ENCODE measurements at regions of chr1 and their contacts with region 1.

Region 1: GRCh38 chr1:74771913-74772515 is 39.1 kb downstream of the TYW3 start:
- DNase-seq: peak; percentile 33
- H3K4me3 Mint-ChIP-seq: no peak overlapping the region
- H3K27ac Mint-ChIP-seq: no peak overlapping the region
- H3K4me1 Mint-ChIP-seq: no peaks in the 10 kb centered on the region
- H3K27me3 Mint-ChIP-seq: peaks cover 8% of the 10 kb centered on the region

Region 2: GRCh38 chr1:74197657-74198552 is 574.1 kb before region 1 on chr1 and contains the starts of genes FPGT and LRRIQ3:
- CTCF ChIA-PET with region 1: no interaction called
- intact Hi-C with region 1: loop called (anchors 10 kb)
- DNase-seq: peak; percentile 95
- H3K4me3 Mint-ChIP-seq: peak within 1 kb of the TSS; percentile 89
- H3K27ac Mint-ChIP-seq: peak within 1 kb of the TSS; percentile 92
- H3K4me1 Mint-ChIP-seq: peaks cover 17% of the 10 kb centered on the region
- H3K27me3 Mint-ChIP-seq: no peaks in the 10 kb centered on the region
- total RNA-seq, gene FPGT: 11.0 to 13.9 TPM
- total RNA-seq, gene LRRIQ3: 1.1 to 1.2 TPM

Region 3: GRCh38 chr1:75134647-75135572 is 362.9 kb after region 1 on chr1:
- CTCF ChIA-PET with region 1: no interaction called
- intact Hi-C with region 1: loop called (anchors 5 kb)
- DNase-seq: peak; percentile 39
- H3K4me3 Mint-ChIP-seq: peak overlapping the region; percentile 69
- H3K27ac Mint-ChIP-seq: no peak overlapping the region
- H3K4me1 Mint-ChIP-seq: peaks cover 23% of the 10 kb centered on the region
- H3K27me3 Mint-ChIP-seq: peaks cover 72% of the 10 kb centered on the region

Region 4: GRCh38 chr1:75203415-75204277 is 431.6 kb after region 1 on chr1:
- CTCF ChIA-PET with region 1: interaction called, 7 read pairs
- intact Hi-C with region 1: loop called (anchors 1 kb)
- DNase-seq: no peak
- H3K4me3 Mint-ChIP-seq: no peak overlapping the region
- H3K27ac Mint-ChIP-seq: no peak overlapping the region
- H3K4me1 Mint-ChIP-seq: no peaks in the 10 kb centered on the region
- H3K27me3 Mint-ChIP-seq: peaks cover 4% of the 10 kb centered on the region

Region 5: DNA sequence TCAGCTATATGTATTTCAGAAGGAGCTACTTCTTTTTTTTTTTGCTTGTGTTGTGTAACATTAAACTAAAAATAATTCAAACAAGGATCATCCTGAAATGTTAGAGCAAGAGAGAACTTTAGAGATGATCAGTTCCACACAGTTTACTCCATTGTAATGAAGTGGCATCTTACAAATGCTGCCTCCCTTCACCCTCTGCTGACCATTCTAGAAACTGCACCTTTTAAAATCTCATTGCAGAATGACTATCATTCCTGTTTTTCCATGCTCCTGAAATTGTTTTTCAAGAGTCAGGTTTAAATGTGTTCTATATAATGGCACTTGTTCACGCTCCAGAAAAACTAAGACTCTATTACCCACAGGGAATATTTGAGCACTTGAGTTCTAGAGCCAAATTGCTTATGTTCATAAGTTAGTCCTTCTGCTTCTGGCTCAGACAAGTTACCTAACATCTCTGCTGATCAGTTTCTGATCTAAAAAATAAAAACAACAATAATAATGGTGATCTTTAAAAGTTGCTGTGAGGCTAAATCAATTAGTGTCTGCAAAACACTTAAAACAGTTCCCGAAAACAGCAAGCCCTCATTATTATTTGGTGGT is 860.4 kb after region 1 on chr1:
- CTCF ChIA-PET with region 1: no interaction called
- intact Hi-C with region 1: loop called (anchors 1 kb)
- DNase-seq: no peak
- H3K4me3 Mint-ChIP-seq: no peak overlapping the region
- H3K27ac Mint-ChIP-seq: no peak overlapping the region
- H3K4me1 Mint-ChIP-seq: no peaks in the 10 kb centered on the region
- H3K27me3 Mint-ChIP-seq: peaks cover 16% of the 10 kb centered on the region

Region 6: GRCh38 chr1:75724472-75725022 is 952.5 kb after region 1 on chr1 and contains the start of gene ACADM:
- CTCF ChIA-PET with region 1: no interaction called
- intact Hi-C with region 1: loop called (anchors 10 kb)
- DNase-seq: peak; percentile 86
- H3K4me3 Mint-ChIP-seq: peak within 1 kb of the TSS; percentile 100
- H3K27ac Mint-ChIP-seq: peak within 1 kb of the TSS; percentile 97
- H3K4me1 Mint-ChIP-seq: peaks cover 37% of the 10 kb centered on the region
- H3K27me3 Mint-ChIP-seq: no peaks in the 10 kb centered on the region
- total RNA-seq, gene ACADM: 37.1 to 38.5 TPM

Region 7: DNA sequence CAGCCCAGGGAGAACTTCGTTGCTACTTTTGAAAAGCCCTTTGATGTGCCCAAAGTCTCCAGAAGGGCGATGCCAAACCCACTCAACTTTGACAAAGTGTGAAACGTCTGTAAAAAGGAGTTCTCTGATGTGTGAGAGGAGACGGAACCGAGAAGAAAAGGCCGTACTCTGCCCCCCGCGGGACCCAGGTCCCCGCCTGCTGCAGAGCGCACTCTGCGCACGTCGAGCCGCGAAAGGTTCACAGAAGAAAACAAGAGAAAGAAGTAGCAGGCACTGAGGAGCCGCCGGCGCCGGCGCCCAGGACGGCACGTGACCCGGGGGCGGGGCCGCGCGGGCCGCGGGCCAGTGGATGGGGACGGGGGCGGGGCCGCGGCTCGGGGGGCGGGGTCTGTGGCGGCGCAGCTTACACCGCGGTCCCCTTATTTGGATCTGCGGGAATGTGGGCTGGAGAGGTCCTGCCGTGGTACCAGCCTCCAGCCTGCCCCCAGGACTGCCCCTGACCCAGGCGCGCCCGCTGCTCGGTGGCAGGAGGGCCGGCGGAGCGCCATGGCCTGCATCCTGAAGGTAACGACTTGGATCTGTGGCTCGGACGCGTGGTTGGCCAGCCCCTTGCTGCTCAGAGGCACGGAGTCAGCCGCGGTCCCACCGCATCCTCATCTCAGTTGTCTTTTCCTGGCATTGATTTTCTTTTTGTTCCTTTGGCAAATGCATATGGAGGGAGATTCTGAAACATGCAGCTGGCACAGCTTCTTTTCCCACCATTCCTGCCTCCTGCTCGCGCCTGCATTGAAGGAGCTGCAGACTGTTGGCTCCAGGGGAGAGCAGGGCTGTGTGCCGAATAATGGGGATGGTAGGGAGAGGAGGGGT is 1302.5 kb after region 1 on chr1 and contains the start of gene ST6GALNAC3:
- CTCF ChIA-PET with region 1: no interaction called
- intact Hi-C with region 1: loop called (anchors 10 kb)
- DNase-seq: peak; percentile 78
- H3K4me3 Mint-ChIP-seq: peak within 1 kb of the TSS; percentile 83
- H3K27ac Mint-ChIP-seq: no peak within 1 kb of the TSS
- H3K4me1 Mint-ChIP-seq: peaks cover 25% of the 10 kb centered on the region
- H3K27me3 Mint-ChIP-seq: no peaks in the 10 kb centered on the region
- total RNA-seq, gene ST6GALNAC3: 2.5 to 2.8 TPM